ENCODE measurements at regions of chr1 and their contacts with region 1.

Region 1: GRCh38 chr1:48817505-48818114 is 40.9 kb upstream of the BEND5 start:
- DNase-seq: peak; percentile 50 to 59
- ATAC-seq: peak; percentile 69 to 76 (median 72)
- H3K4me3 ChIP-seq: no peak overlapping the region
- H3K27ac ChIP-seq: no peak overlapping the region
- H3K4me1 ChIP-seq: no peaks in the 10 kb centered on the region
- H3K27me3 ChIP-seq: no peaks in the 10 kb centered on the region
- CTCF ChIP-seq: peak; percentile 67

Region 2: DNA sequence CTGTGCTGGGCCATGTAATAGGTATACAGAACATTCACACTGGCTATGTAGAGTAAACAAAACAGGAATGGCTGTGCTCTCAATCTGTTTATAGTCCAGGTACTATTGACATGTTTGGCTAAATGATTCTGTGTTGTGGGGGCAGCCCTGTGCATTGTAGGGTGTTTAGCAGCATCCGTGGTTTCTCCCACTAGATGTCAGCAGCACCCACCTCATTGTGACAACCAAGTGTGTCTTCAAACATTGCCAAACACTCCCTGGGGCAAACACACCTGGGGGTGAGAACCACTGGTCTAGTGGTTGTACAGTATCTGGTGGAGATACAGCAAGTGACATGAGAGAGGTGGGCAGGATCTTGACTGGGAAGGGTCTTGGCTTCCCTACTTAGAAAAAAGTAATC is 265.2 kb before region 1 on chr1:
- intact Hi-C with region 1: loop called in 1 of 2 experiments (anchors 5 kb)
- DNase-seq: no peak
- ATAC-seq: peak; percentile 61 to 76 (median 67)
- H3K4me3 ChIP-seq: no peak overlapping the region
- H3K27ac ChIP-seq: peak overlapping the region; percentile 66
- H3K4me1 ChIP-seq: peaks cover 18% of the 10 kb centered on the region
- H3K27me3 ChIP-seq: no peaks in the 10 kb centered on the region
- CTCF ChIP-seq: peak; percentile 63

Region 3: DNA sequence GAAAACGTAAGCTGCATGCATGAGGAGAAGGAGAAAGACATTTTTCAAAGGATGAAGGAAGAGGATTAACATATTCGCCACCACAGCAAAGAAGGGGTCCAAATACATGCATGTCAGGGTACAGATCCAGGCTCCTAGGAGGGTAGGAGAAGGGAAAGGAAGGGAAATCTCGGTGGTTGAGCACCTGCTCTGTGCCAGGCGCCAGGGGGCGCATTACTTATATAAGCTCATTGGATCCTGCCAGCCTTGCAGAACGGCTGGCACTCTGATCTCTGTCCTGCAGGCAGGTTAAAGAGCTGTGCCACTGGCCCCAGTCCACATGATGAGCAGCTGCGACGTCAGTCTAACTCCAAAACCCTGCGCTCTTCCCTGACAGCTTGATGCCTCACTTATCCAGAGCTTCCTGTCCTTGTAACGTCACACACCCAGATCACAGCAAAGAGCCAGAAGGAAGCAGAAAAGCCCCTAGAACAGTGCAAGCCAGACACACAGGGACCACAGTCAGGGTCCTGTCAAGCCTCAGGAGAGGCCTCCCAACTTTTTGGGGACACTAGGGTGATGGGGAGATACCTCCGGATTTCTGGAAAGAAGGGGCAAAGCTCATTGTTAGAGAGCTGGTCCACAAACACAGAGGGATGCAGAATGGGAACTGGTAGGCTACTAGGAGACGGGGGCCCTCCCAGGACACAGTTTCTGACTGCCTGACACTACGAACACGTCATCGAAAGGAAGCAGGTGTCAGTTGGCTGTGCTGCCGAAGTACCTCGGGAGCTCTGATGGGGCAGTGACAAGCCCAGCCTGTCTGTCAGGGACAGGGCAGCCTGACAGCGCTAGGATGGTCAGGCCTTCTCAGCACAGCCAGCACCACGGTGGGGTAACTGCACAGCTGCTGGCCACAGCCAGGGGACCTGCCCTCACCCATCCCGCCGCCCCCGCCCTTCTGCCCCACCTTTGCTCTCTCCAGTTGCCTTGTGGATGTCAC is 140.0 kb before region 1 on chr1:
- intact Hi-C with region 1: loop called (anchors 5 to 10 kb)
- DNase-seq: peak; percentile 63 to 79
- ATAC-seq: peak; percentile 85 to 94 (median 89)
- H3K4me3 ChIP-seq: no peak overlapping the region
- H3K27ac ChIP-seq: no peak overlapping the region
- H3K4me1 ChIP-seq: no peaks in the 10 kb centered on the region
- H3K27me3 ChIP-seq: no peaks in the 10 kb centered on the region
- CTCF ChIP-seq: peak; percentile 71

Region 4: DNA sequence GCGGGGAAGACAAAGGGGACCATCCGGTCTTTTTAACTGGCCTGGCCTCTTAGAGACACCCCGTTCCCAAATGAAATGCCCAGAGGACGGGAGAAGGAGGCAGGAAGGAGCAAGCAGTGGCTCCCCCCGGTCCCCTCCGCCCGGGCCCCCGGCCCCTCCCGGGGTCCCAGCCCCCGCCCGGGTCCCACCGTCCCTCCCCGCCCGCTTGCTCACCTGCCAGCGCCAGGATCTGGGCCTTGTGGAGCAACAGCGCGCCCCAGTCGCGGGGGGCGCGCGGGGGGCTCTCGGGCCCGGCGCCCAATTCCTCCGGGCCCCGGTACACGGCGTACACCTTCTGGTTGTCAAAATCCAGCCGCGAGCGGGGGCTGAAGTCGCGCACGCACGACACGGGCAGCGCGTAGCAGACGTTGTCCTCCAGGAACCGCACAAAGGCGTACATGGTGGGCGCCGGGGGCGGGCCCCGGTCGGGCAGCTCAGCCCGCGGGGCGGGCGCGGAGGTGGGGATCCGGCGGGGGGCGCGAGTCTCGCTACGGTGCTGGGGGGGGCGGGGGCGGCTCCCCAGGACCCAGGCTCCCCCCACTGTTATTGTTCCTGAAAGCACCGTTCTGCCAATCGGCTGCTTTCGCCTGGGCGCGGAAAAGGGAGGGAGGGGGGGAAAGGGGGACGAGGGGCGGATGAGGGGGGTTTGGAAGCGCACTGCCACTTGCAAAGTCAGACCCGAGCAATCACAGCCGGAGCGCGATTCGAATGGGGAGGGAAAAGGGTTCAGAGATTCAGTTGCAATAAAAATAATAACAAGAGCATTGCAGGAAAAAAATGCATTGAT is 41.0 kb before region 1 on chr1 and contains the start of gene BEND5:
- intact Hi-C with region 1: no loop called
- DNase-seq: peak; percentile 58 to 72
- ATAC-seq: peak; percentile 68 to 89 (median 74)
- H3K4me3 ChIP-seq: peak within 1 kb of the TSS; percentile 84
- H3K27ac ChIP-seq: peak within 1 kb of the TSS; percentile 60
- H3K4me1 ChIP-seq: peaks cover 17% of the 10 kb centered on the region
- H3K27me3 ChIP-seq: no peaks in the 10 kb centered on the region
- CTCF ChIP-seq: no peak
- total RNA-seq, gene BEND5: 1.6 to 3.7 (median 3.4) TPM

Region 5: GRCh38 chr1:48947761-48948537 is 130.3 kb after region 1 on chr1:
- intact Hi-C with region 1: no loop called
- DNase-seq: no peak
- ATAC-seq: no peak
- H3K4me3 ChIP-seq: no peak overlapping the region
- H3K27ac ChIP-seq: no peak overlapping the region
- H3K4me1 ChIP-seq: no peaks in the 10 kb centered on the region
- H3K27me3 ChIP-seq: peaks cover 0 to 3% (median 0%) of the 10 kb centered on the region in 3 donors
- CTCF ChIP-seq: no peak